ENCODE measurements at regions of chr15 and their contacts with region 1.

Region 1: DNA sequence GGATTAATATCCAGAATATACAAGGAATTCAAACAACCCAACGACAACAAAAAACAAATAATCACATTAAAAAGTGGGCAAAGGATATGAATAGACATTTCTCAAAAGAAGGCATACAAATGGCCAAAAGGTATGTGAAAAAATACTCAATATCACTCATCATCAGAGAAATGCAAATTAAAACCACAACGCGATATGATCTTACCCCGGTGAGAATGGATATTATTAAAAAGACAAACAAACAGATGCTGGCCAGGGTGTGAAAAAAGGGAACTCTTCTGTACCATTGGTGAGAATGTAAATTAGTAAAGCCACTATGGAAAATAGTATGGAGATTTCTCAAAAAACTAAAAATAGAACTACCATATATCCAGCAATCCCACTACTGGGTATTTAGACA is 43.5 kb upstream of the MEF2A start:
- DNase-seq: no peak
- ATAC-seq: no peak
- H3K4me3 ChIP-seq: no peak overlapping the region
- H3K27ac ChIP-seq: no peak overlapping the region
- H3K4me1 ChIP-seq: no peaks in the 10 kb centered on the region
- H3K27me3 ChIP-seq: no peaks in the 10 kb centered on the region
- CTCF ChIP-seq: no peak
- POLR2A ChIP-seq: no peak

Region 2: DNA sequence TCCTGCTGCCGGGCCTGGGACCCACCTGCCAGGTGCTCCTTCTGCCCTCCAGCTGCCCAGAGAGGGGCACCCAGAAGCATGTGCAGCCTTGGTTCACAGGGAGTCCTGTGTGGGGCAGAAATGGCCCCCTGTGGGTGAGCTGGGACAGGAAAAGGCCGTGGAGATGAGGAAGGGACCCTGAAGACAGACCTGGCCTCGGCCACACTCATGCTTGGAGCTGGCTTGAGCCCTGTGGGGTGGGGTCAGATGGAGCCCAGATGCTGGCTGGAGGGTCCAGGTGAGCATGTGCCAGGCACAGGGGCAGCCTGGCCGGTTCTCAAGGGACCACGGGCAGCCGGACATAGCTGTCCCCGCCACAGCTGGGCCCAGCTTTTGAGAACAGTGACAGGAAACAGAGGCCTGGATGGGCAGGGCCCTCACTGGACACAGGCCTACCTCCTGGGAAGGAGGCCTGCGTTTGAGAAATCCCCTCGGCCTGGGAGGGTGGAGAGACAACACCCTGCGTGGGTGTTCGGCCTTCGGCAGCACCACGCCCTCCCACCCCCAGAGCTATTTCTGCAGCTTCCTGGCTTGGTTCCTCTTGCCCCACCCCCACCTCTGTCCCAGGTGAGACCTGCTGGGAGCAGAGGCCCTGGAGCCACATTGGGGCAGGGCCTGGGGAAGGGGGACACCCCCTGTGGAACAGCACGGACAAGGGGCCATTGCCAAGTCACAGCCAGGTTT is 89.1 kb before region 1 on chr15:
- in situ Hi-C with region 1: no loop called
- intact Hi-C with region 1: no loop called
- DNase-seq: peak in 1 of 2 donors; percentile 13
- ATAC-seq: peak; percentile 15 to 22
- H3K4me3 ChIP-seq: no peak overlapping the region
- H3K27ac ChIP-seq: peak overlapping the region in 3 of 4 donors; percentile 44 to 60 (median 55)
- H3K4me1 ChIP-seq: peaks cover 16 to 17% of the 10 kb centered on the region in 2 donors
- H3K27me3 ChIP-seq: no peaks in the 10 kb centered on the region
- CTCF ChIP-seq: no peak
- POLR2A ChIP-seq: no peak

Region 3: DNA sequence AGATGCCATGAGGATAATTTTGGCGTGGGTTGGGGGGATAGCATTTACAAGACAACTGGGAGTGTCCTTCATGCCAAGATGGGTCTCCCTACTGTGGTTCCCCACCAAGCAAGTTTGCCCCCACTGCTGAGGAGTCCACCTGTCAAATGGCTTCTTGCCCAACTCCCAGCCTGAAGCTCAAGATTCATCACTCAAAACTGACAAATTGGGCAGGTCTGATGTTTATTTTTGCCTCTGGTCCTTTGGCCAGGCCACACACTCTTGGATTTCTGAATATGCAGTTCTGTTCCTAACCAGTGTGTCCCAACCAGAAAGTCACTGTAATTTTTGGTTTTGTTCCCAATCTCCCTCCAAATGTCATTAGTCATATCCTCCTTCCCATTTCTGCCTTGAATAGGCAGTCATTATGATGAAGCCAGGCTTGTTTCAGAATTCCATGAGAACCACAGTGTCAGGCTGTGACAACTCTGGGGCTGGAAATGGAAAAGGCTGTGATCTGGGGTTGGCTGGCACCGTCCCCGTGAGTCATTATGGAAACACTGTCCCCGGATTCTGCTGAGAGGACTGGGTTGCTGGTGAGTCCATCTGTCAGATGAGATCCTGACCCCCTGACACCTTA is 14.2 kb after region 1 on chr15:
- in situ Hi-C with region 1: no loop called
- intact Hi-C with region 1: loop called (anchors 1 kb)
- DNase-seq: peak in 1 of 2 donors; percentile 34
- ATAC-seq: peak; percentile 84 to 93
- H3K4me3 ChIP-seq: no peak overlapping the region
- H3K27ac ChIP-seq: peak overlapping the region; percentile 32 to 71 (median 60)
- H3K4me1 ChIP-seq: peaks cover 5 to 12% of the 10 kb centered on the region in 2 donors
- H3K27me3 ChIP-seq: no peaks in the 10 kb centered on the region
- CTCF ChIP-seq: no peak
- POLR2A ChIP-seq: no peak

Region 4: DNA sequence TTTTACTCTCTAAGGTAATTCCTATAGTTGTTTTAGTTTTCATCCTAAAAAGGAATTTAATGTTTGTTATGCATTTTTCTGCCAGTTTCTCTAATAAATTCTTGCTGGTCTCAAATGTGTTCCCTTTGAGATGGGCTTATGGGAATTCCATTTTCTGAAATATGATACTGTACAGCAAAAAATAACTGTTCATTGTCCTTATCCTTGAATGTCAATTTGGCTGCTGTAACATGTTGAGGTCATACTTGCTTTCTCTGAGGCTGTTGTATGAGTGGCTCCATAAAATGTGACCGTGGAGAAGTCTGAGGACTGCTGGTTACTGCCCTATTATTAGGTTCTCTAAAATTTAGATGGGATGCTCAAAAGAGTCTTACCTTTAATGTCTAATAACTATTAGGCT is 552.9 kb after region 1 on chr15:
- in situ Hi-C with region 1: no loop called
- intact Hi-C with region 1: no loop called
- DNase-seq: no peak
- ATAC-seq: no peak
- H3K4me3 ChIP-seq: no peak overlapping the region
- H3K27ac ChIP-seq: no peak overlapping the region
- H3K4me1 ChIP-seq: peaks cover 0 to 10% of the 10 kb centered on the region in 2 donors
- H3K27me3 ChIP-seq: no peaks in the 10 kb centered on the region
- CTCF ChIP-seq: no peak
- POLR2A ChIP-seq: no peak